A549 (cell line): ENCODE measurements at regions of chr2 and their contacts with region 1.

Region 1: DNA sequence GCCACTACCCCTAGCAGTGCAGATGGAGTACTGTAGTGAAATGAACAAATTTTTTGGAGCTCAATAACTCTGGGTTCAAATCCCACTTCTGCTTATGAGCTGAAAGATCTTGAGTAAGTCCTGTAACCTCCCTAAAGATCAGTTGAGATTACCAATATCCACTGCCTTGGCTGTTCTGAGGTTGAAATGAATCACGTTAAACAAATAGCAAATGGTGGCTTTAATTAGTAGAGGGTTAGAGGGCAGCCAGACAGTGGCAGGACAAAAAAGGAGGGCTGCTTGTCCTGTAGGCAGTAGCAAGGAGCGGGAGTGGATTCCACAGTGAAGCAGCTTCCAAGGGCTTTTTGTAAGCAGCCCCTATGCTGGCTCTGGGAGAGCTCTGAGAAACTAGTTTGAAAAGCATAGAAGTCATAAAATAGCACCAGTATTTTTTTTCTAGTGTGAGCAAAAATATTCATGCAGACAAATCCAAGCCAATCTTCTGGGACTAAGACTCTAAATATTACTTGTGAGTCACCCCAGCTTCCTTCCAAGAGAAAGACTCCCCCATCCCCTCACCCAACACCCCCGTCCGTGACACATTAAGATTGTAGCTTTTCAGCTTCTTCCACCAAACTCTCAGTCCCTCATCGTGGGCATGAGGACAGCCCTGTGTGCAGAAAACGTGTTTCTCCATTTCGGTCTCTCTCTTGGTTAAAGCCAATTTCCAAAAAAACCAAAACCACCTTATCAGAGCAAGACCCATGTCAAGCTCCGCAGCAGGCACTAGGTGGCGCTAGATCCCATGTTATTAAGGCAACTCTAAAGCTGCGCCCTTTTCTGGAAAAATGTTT is 123.5 kb upstream of the LGALSL start:
- DNase-seq: peak in 1 of 2 experiments; percentile 88
- ATAC-seq: peak; percentile 64 to 87; a peak in 5 of 6 replicates
- H3K4me3 ChIP-seq: no peak overlapping the region
- H3K27ac ChIP-seq: no peak overlapping the region; a peak in 1 of 6 replicates
- H3K4me1 ChIP-seq: peaks cover 12% of the 10 kb centered on the region
- CTCF ChIP-seq: peak; percentile 98
- EP300 ChIP-seq: no peak
- POLR2A ChIP-seq: no peak
- RAD21 ChIP-seq: peak; percentile 99

Region 2: DNA sequence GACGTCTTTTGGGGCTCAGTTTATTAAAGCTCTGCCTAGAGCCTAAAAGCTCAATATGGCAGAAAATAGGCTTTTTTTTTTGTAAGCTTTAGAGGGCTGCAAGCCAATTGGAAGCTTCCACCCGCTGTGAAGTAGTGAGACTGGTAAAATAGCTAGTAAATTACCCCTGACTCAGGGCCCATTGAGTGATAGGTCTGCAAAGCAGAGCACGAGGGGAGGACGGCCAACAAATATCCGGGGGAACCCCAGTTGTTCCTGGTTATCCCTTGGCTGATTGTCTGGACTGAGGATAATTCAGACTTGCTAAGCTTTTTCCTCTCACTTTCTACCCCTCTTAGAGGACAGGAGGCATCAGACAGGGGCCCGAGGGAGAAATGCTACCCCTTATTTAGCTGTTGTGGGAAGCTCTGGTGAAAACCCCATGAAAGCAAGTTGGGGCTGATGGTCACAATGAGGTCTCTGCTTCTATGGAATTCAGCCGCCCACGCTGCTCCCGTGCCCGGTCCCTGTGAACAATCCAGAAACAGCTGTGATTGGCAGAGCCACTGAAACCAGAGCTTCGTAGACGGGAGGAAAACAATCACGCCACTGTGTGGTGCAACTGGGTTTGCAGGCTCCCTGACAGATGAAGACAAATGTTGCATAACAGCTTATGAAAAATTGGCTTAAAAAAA is 18.4 kb before region 1 on chr2:
- CTCF ChIA-PET with region 1: interaction called, 126 read pairs
- POLR2A ChIA-PET with region 1: no interaction called
- DNase-seq: peak; percentile 18 to 53
- ATAC-seq: peak; percentile 55 to 87; a peak in 5 of 6 replicates
- H3K4me3 ChIP-seq: no peak overlapping the region
- H3K27ac ChIP-seq: no peak overlapping the region
- H3K4me1 ChIP-seq: no peaks in the 10 kb centered on the region
- CTCF ChIP-seq: 0 out of 3 replicates have a peak, but pooled peaks have one; percentile 17
- EP300 ChIP-seq: no peak
- POLR2A ChIP-seq: no peak
- RAD21 ChIP-seq: peak; percentile 30 to 34; a peak in 3 of 5 replicates

Region 3: DNA sequence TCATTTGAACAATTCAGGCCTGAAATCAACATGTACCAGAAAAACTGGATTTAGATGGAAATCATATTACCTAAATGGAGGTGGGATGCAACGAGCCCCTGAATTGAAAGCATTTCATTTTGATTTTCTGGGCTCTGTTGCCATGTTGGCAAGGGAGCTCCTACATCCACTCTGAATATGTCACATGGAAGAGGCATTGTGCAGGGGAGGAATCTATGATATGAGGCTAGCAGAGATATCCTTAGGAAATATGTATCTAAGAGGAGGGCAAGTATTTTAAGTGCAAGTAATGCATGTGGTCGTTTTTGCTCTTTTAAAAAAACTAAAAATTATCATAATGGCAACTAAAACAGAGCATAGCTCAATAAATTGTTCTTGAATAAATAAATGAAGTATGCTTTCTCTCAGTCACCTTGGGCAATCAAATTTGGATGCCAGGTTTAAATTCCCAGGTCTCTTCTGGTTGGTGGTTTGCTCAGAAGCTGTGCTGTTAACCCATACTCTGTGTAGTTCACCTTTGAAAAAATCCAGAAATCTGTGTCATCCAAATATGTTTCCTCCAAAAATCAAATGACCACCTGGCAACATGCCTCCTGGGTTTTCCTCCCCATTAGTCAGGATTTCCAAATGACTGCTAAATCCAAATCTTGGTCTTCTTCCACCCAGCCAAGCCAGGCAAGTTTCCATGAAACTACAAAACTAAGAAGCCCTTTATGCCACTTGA is 117.0 kb after region 1 on chr2:
- CTCF ChIA-PET with region 1: interaction called, 15 read pairs
- POLR2A ChIA-PET with region 1: no interaction called
- DNase-seq: no peak
- ATAC-seq: no peak
- H3K4me3 ChIP-seq: no peak overlapping the region
- H3K27ac ChIP-seq: no peak overlapping the region
- H3K4me1 ChIP-seq: peaks cover 2% of the 10 kb centered on the region; the same call in 1 of the 3 replicates
- CTCF ChIP-seq: no peak
- EP300 ChIP-seq: no peak
- POLR2A ChIP-seq: no peak
- RAD21 ChIP-seq: no peak

Region 4: GRCh38 chr2:64493788-64494187 is 163.3 kb after region 1 on chr2:
- CTCF ChIA-PET with region 1: interaction called, 533 read pairs
- POLR2A ChIA-PET with region 1: no interaction called
- DNase-seq: no peak
- ATAC-seq: 0 out of 6 replicates have a peak, but pooled peaks of 1 of the 2 experiments have one; percentile 27
- H3K4me3 ChIP-seq: no peak overlapping the region
- H3K27ac ChIP-seq: no peak overlapping the region
- H3K4me1 ChIP-seq: no peaks in the 10 kb centered on the region
- CTCF ChIP-seq: no peak
- EP300 ChIP-seq: no peak
- POLR2A ChIP-seq: no peak
- RAD21 ChIP-seq: no peak

Region 5: GRCh38 chr2:64548761-64549160 is 218.3 kb after region 1 on chr2:
- CTCF ChIA-PET with region 1: interaction called, 15 read pairs
- POLR2A ChIA-PET with region 1: no interaction called
- DNase-seq: no peak
- ATAC-seq: no peak
- H3K4me3 ChIP-seq: no peak overlapping the region
- H3K27ac ChIP-seq: no peak overlapping the region
- H3K4me1 ChIP-seq: peaks cover 16% of the 10 kb centered on the region
- CTCF ChIP-seq: no peak
- EP300 ChIP-seq: no peak
- POLR2A ChIP-seq: no peak
- RAD21 ChIP-seq: no peak

Region 6: GRCh38 chr2:64865073-64865830 is 534.8 kb after region 1 on chr2:
- CTCF ChIA-PET with region 1: interaction called, 14 read pairs
- POLR2A ChIA-PET with region 1: no interaction called
- DNase-seq: peak; percentile 69 to 76
- ATAC-seq: peak; percentile 86 to 95
- H3K4me3 ChIP-seq: peak overlapping the region; percentile 62
- H3K27ac ChIP-seq: peak overlapping the region; percentile 85 to 92
- H3K4me1 ChIP-seq: peaks cover 20% of the 10 kb centered on the region
- CTCF ChIP-seq: peak; percentile 99
- EP300 ChIP-seq: no peak
- POLR2A ChIP-seq: no peak
- RAD21 ChIP-seq: peak; percentile 69 to 99